Naive thymus-derived CD4-positive, alpha-beta T cell (primary cell): ENCODE measurements at regions of chr1 and their contacts with region 1.

Region 1: GRCh38 chr1:214637722-214638458 is 34.9 kb downstream of the CENPF start:
- DNase-seq: peak in 5 of 9 donors; percentile 9 to 48 (median 36)
- ATAC-seq: peak; percentile 46
- H3K4me3 ChIP-seq: no peak overlapping the region
- H3K4me3 Mint-ChIP-seq: peak overlapping the region in 9 of 10 donors; percentile 45 to 82 (median 62)
- H3K27ac ChIP-seq: no peak overlapping the region
- H3K27ac Mint-ChIP-seq: peak overlapping the region in 6 of 9 donors; percentile 59 to 91 (median 80)
- H3K4me1 ChIP-seq: peaks cover 0 to 45% of the 10 kb centered on the region in 2 donors
- H3K4me1 Mint-ChIP-seq: peaks cover 4 to 44% (median 10%) of the 10 kb centered on the region in 7 donors
- H3K27me3 ChIP-seq: no peaks in the 10 kb centered on the region
- H3K27me3 Mint-ChIP-seq: no peaks in the 10 kb centered on the region

Region 2: GRCh38 chr1:214281021-214281719 is 356.7 kb before region 1 on chr1 and contains the start of gene SMYD2:
- CTCF ChIA-PET with region 1: no interaction called
- POLR2A ChIA-PET with region 1: interaction called, 3 read pairs
- intact Hi-C with region 1: loop called in 1 of 2 experiments (anchors 2 kb)
- DNase-seq: peak; percentile 49 to 77 (median 72)
- ATAC-seq: peak; percentile 86
- H3K4me3 ChIP-seq: peak within 1 kb of the TSS; percentile 88
- H3K4me3 Mint-ChIP-seq: peak within 1 kb of the TSS; percentile 79 to 98 (median 90)
- H3K27ac ChIP-seq: peak within 1 kb of the TSS; percentile 82
- H3K27ac Mint-ChIP-seq: peak within 1 kb of the TSS; percentile 81 to 95 (median 91)
- H3K4me1 ChIP-seq: peaks cover 17 to 34% of the 10 kb centered on the region in 2 donors
- H3K4me1 Mint-ChIP-seq: peaks cover 30 to 64% (median 45%) of the 10 kb centered on the region in 7 donors
- H3K27me3 ChIP-seq: no peaks in the 10 kb centered on the region
- H3K27me3 Mint-ChIP-seq: no peaks in the 10 kb centered on the region
- total RNA-seq, gene SMYD2: 24.3 to 39.5 (median 34.4) TPM

Region 3: GRCh38 chr1:214427871-214428277 is 210.0 kb before region 1 on chr1:
- CTCF ChIA-PET with region 1: no interaction called
- POLR2A ChIA-PET with region 1: no interaction called
- intact Hi-C with region 1: loop called in 1 of 2 experiments (anchors 5 kb)
- DNase-seq: peak in 8 of 9 donors; percentile 54 to 82 (median 71)
- ATAC-seq: peak; percentile 95
- H3K4me3 ChIP-seq: no peak overlapping the region
- H3K4me3 Mint-ChIP-seq: peak overlapping the region; percentile 50 to 81 (median 64)
- H3K27ac ChIP-seq: no peak overlapping the region
- H3K27ac Mint-ChIP-seq: peak overlapping the region; percentile 64 to 98 (median 85)
- H3K4me1 ChIP-seq: peaks cover 11 to 18% of the 10 kb centered on the region in 2 donors
- H3K4me1 Mint-ChIP-seq: peaks cover 18 to 48% (median 34%) of the 10 kb centered on the region in 7 donors
- H3K27me3 ChIP-seq: no peaks in the 10 kb centered on the region
- H3K27me3 Mint-ChIP-seq: peaks cover 0 to 3% (median 0%) of the 10 kb centered on the region in 5 donors

Region 4: GRCh38 chr1:214602764-214603657 is 34.9 kb before region 1 on chr1 and contains the start of gene CENPF:
- CTCF ChIA-PET with region 1: no interaction called
- POLR2A ChIA-PET with region 1: interaction called, 5 read pairs
- intact Hi-C with region 1: loop called in 1 of 2 experiments (anchors 1 kb)
- DNase-seq: peak; percentile 79 to 96 (median 94)
- ATAC-seq: peak; percentile 99
- H3K4me3 ChIP-seq: peak within 1 kb of the TSS; percentile 60
- H3K4me3 Mint-ChIP-seq: peak within 1 kb of the TSS; percentile 86 to 97 (median 92)
- H3K27ac ChIP-seq: peak within 1 kb of the TSS; percentile 48
- H3K27ac Mint-ChIP-seq: peak within 1 kb of the TSS; percentile 52 to 98 (median 87)
- H3K4me1 ChIP-seq: peaks cover 0 to 6% of the 10 kb centered on the region in 2 donors
- H3K4me1 Mint-ChIP-seq: peaks cover 6 to 29% (median 24%) of the 10 kb centered on the region in 7 donors
- H3K27me3 ChIP-seq: no peaks in the 10 kb centered on the region
- H3K27me3 Mint-ChIP-seq: peaks cover 0 to 2% (median 0%) of the 10 kb centered on the region in 5 donors
- total RNA-seq, gene CENPF: 2.1 to 79.9 (median 4.1) TPM

Region 5: DNA sequence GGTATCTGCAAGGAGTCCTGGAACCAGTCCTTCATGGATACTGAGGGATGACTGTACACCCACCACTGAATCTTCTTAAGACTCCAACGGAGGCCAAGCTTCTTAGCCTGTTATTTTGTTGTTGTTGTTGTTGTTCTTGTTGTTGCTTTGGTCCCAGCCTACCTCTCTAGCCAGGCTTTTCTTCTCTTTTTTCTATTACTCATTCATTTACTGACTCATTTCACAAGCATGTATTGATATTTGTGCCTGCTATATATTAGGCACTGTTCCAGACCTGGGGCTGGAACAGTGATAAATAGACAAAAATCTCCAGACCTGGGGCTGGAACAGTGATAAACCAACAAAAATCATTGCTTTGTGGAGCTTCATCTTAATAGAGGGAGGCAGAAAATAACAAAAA is 14.5 kb before region 1 on chr1:
- CTCF ChIA-PET with region 1: interaction called, 21 read pairs
- POLR2A ChIA-PET with region 1: no interaction called
- intact Hi-C with region 1: loop called (anchors 1 kb)
- DNase-seq: no peak
- ATAC-seq: no peak
- H3K4me3 ChIP-seq: no peak overlapping the region
- H3K4me3 Mint-ChIP-seq: no peak overlapping the region
- H3K27ac ChIP-seq: no peak overlapping the region
- H3K27ac Mint-ChIP-seq: no peak overlapping the region
- H3K4me1 ChIP-seq: no peaks in the 10 kb centered on the region
- H3K4me1 Mint-ChIP-seq: peaks cover 0 to 17% (median 0%) of the 10 kb centered on the region in 7 donors
- H3K27me3 ChIP-seq: no peaks in the 10 kb centered on the region
- H3K27me3 Mint-ChIP-seq: no peaks in the 10 kb centered on the region

Region 6: GRCh38 chr1:214660862-214661261 is 23.0 kb after region 1 on chr1:
- CTCF ChIA-PET with region 1: interaction called, 10 read pairs
- POLR2A ChIA-PET with region 1: interaction called, 5 read pairs
- intact Hi-C with region 1: loop called in 1 of 2 experiments (anchors 1 kb)
- DNase-seq: peak in 7 of 9 donors; percentile 7 to 51 (median 45)
- ATAC-seq: peak; percentile 49
- H3K4me3 ChIP-seq: no peak overlapping the region
- H3K4me3 Mint-ChIP-seq: no peak overlapping the region
- H3K27ac ChIP-seq: no peak overlapping the region
- H3K27ac Mint-ChIP-seq: peak overlapping the region in 4 of 9 donors; percentile 8 to 42 (median 30)
- H3K4me1 ChIP-seq: no peaks in the 10 kb centered on the region
- H3K4me1 Mint-ChIP-seq: peaks cover 0 to 20% (median 7%) of the 10 kb centered on the region in 7 donors
- H3K27me3 ChIP-seq: no peaks in the 10 kb centered on the region
- H3K27me3 Mint-ChIP-seq: no peaks in the 10 kb centered on the region

Region 7: DNA sequence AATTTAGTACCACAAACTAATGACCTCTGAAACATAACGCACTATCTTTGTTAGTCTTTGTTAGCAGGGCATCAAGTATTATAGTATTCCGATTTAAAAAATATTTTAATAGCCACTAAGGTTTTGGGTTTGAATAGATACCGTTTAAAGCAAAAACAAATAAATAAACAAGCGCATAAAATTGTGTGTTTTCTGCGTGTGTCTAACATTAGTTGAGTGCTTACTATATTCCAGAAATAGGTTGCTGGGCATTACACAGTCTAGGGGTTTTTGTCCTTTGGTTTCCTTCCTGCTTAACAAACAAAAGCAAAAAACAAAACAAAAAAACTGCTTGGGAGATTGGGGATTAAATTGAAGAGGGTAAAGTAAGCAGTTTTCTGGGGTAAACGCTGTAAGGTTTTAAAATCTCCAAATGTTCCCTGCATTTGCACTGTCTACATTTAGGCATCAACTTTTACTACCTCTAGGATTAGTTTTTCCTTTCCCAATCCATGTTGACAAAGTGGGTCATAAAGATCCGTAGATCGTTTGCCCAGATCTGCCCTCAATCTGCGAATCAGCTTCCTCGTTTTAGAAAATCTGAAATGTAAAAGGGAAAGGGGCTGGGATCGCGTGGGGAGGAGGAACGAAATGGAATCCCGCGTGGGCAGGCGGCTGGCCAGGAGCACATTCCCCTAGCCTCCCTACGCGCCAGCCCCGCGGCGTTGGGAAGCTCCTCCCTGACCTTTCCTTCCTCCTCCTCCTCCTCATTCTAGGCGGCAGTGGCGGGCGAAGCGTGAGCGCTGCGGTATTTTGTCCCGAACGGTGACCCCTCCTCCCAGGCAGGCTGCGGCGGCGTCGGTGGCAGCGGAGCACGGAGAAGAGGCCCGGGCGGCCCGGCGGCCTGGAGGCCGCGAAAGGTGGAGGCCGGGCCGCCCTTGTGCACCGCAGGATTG is 928.9 kb after region 1 on chr1 and contains the start of gene KCTD3:
- CTCF ChIA-PET with region 1: no interaction called
- POLR2A ChIA-PET with region 1: interaction called, 3 read pairs
- intact Hi-C with region 1: loop called in 1 of 2 experiments (anchors 5 kb)
- DNase-seq: peak; percentile 8 to 54 (median 24)
- ATAC-seq: peak; percentile 67
- H3K4me3 ChIP-seq: peak within 1 kb of the TSS; percentile 68
- H3K4me3 Mint-ChIP-seq: peak within 1 kb of the TSS; percentile 87 to 98 (median 95)
- H3K27ac ChIP-seq: peak within 1 kb of the TSS; percentile 23
- H3K27ac Mint-ChIP-seq: peak within 1 kb of the TSS; percentile 43 to 95 (median 84)
- H3K4me1 ChIP-seq: peaks cover 0 to 7% of the 10 kb centered on the region in 2 donors
- H3K4me1 Mint-ChIP-seq: peaks cover 8 to 39% (median 24%) of the 10 kb centered on the region in 7 donors
- H3K27me3 ChIP-seq: no peaks in the 10 kb centered on the region
- H3K27me3 Mint-ChIP-seq: peaks cover 6 to 24% (median 13%) of the 10 kb centered on the region in 5 donors
- total RNA-seq, gene KCTD3: 3.5 to 7.4 (median 5.4) TPM